Motor neuron (in vitro differentiated cells): ENCODE measurements at regions of chr7 and their contacts with region 1.

Region 1: DNA sequence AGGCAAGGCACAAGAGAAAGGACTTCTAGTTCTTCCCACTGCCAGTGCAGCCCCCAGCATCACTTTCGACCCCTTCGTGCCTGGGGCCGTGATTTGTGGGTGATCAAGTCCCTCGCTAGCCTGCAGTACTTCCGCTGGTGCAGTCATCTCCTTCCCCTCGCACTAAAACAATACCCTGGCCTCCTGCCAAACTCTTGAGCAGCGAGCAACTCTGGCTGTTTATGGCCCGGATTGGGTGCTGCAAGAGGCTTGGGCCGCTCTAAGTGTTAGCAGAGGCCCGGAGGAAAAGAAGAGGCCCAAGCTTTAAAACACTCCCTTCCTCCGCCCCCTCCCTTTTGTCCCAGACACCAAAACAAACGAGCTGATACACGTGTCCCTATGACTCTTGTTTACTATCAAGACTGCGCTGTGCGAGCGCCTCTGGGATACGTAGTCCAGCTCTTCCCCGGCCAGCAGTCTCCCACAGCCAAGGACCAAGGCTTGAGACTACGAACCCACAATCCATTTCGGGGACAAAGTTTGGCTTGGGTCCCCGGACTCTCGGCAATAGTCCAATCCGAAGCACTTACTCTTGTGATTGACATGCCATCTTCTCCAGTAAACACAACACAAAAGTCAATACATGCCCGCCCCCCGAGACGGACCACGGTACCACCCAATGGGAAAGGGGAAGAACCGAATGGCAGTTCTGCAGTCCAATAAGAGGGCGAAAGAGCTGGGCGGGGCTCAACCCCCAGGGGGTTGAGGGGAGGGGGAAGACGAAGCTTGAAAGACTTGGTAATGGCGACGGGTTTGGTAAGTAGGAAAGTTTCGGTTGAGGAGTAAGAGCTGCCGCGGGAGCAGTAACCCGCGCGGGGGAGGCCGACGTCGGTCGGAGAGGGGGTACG is at the start of gene HBP1:
- ATAC-seq: peak; percentile 75 to 87 (median 86)
- H3K4me3 ChIP-seq: peak within 1 kb of the TSS; percentile 63 to 89 (median 81)
- H3K27ac ChIP-seq: peak within 1 kb of the TSS; percentile 90 to 97
- H3K4me1 ChIP-seq: peaks cover 0 to 3% of the 10 kb centered on the region in 2 donors
- total RNA-seq, gene HBP1: 30.4 to 101 (median 61.2) TPM

Region 2: DNA sequence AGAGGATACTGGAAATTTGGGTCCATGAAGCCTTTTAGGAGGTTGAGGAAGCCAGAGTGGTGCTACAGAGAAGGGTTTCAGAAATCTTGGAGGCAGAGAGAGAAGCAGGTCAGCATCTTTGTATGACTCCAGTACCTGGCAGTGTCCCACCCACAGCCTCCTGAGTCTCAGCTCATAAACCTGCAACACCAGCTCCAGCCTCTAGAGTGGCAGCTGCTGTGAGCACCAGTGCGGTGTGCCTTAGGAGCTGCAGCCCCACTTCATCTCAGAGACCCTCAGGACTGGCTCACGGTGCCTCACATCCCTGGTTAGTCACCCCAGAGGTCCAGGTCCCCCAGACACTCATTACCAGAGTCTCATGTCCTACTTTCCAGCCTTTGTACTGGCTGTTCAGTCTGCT is 208.7 kb before region 1 on chr7:
- in situ Hi-C with region 1: loop called in 1 of 9 experiments (anchors 25 kb)
- ATAC-seq: peak in 3 of 8 experiments; percentile 23 to 73 (median 31)
- H3K4me3 ChIP-seq: no peak overlapping the region
- H3K27ac ChIP-seq: no peak overlapping the region
- H3K4me1 ChIP-seq: peaks cover 7 to 8% of the 10 kb centered on the region in 2 donors